MCF 10A (cell line): ENCODE measurements at regions of chr11 and their contacts with region 1.

Region 1: GRCh38 chr11:88414385-88414861 is 76.9 kb upstream of the CTSC start:
- DNase-seq: peak; percentile 83
- H3K4me3 Mint-ChIP-seq: no peak overlapping the region
- H3K27ac Mint-ChIP-seq: peak overlapping the region; percentile 20
- H3K4me1 Mint-ChIP-seq: peaks cover 37% of the 10 kb centered on the region
- H3K27me3 Mint-ChIP-seq: no peaks in the 10 kb centered on the region
- CTCF ChIP-seq: no peak

Region 2: DNA sequence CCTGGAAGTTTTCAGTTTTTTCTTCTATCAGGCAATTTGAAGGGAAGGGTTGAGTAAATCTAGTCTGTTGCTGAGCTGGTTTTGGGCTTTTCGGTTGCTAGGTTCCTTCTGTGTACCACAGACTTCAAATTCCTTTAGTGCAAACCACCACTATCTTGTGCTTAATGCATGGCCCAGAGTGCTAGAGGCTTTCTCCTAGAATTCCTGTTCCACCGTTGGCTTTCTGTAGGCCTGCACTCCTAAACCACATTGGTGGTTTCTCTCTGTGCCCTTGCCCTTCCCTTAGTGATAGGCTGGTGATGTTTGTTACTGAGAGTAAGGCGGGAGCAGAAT is 29.8 kb before region 1 on chr11:
- CTCF ChIA-PET with region 1: interaction called, 3 read pairs
- POLR2A ChIA-PET with region 1: interaction called, 19 read pairs
- intact Hi-C with region 1: no loop called
- DNase-seq: no peak
- H3K4me3 Mint-ChIP-seq: peak overlapping the region; percentile 4
- H3K27ac Mint-ChIP-seq: peak overlapping the region; percentile 7
- H3K4me1 Mint-ChIP-seq: peaks cover 15% of the 10 kb centered on the region
- H3K27me3 Mint-ChIP-seq: no peaks in the 10 kb centered on the region
- CTCF ChIP-seq: no peak